Dendritic cell treated with granulocyte-macrophage colony-stimulating factor and Interleukin-4, amounts not matched to agents 40 ng/mL and 50 ng/mL, for 4 days (primary cell): ENCODE measurements at regions of chr7 and their contacts with region 1.

Region 1: GRCh38 chr7:65307651-65308299 is 65.9 kb upstream of the ZNF92 start:
- H3K4me3 Mint-ChIP-seq: no peak overlapping the region
- H3K27ac Mint-ChIP-seq: no peak overlapping the region
- H3K4me1 Mint-ChIP-seq: no peaks in the 10 kb centered on the region
- H3K27me3 Mint-ChIP-seq: no peaks in the 10 kb centered on the region

Region 2: GRCh38 chr7:64951250-64951848 is 356.4 kb before region 1 on chr7:
- intact Hi-C with region 1: loop called (anchors 1 kb)
- H3K4me3 Mint-ChIP-seq: no peak overlapping the region
- H3K27ac Mint-ChIP-seq: no peak overlapping the region
- H3K4me1 Mint-ChIP-seq: no peaks in the 10 kb centered on the region
- H3K27me3 Mint-ChIP-seq: peaks cover 43% of the 10 kb centered on the region

Region 3: DNA sequence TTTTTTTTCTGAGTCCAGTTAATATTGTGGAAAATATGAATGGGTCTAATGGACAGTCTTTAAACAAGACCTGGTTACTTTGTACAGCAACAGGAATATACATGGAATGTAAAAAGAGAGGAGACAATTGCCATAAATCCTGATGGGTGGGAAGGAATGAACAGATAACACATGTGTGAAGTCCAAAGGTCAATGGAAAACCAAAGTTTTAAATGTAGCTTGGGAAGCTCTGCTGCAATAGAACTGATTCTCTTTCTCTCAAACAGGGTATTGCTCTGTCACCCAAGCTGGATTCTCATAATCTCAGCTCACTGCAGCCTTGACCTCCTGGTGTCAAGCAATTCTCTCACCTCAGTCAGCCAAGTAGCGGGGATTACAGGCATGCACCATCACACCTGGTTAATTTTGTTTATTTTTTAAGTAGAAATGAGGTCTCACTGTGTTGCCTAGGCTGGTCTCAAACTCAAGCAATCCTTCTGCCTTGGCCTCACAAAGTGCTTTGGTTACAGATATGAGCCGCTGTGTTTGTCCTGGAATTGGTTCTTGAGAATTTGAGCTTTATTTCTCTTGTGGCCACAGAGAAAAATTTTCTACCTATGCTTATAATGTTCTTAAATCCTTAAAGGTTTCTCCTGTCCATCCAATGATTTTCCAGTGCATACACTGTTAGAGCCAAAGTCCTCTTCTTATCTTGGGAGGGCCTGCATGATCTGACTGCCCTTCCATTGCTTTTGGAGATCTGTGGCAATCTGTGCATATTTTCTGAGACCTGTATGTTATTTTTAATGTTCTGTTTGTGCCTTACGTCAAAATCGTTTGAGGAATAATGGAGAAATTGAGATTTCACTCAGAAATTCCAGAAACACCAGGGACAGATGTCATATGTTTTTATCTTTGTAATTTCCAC is 35.2 kb after region 1 on chr7:
- intact Hi-C with region 1: no loop called
- H3K4me3 Mint-ChIP-seq: no peak overlapping the region
- H3K27ac Mint-ChIP-seq: no peak overlapping the region
- H3K4me1 Mint-ChIP-seq: no peaks in the 10 kb centered on the region
- H3K27me3 Mint-ChIP-seq: peaks cover 2% of the 10 kb centered on the region

Region 4: DNA sequence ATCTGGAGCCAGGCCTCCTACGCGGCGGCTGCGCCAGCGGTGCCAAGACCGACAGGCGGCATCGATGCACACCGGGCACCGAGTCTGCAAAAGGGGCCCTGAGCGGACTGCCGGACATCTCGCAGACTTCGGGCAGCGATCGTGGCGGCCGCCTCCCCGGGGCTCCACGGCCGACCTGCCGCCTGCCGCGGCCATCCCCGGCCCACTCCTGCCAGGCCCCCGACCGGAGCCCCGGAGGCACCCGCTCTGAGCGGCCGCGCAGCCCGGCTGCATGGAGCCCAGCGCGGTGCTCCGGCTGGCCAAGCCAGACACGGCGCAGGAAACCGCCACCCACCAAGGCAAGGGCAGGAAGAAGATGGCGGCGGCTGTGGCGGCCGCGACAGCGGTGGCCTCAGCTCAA is 1166.7 kb after region 1 on chr7:
- intact Hi-C with region 1: no loop called
- H3K4me3 Mint-ChIP-seq: no peak overlapping the region
- H3K27ac Mint-ChIP-seq: no peak overlapping the region
- H3K4me1 Mint-ChIP-seq: no peaks in the 10 kb centered on the region
- H3K27me3 Mint-ChIP-seq: no peaks in the 10 kb centered on the region